Head of caudate nucleus (tissue), 42 donors: ENCODE measurements at regions of chr2 and their contacts with region 1.

Region 1: DNA sequence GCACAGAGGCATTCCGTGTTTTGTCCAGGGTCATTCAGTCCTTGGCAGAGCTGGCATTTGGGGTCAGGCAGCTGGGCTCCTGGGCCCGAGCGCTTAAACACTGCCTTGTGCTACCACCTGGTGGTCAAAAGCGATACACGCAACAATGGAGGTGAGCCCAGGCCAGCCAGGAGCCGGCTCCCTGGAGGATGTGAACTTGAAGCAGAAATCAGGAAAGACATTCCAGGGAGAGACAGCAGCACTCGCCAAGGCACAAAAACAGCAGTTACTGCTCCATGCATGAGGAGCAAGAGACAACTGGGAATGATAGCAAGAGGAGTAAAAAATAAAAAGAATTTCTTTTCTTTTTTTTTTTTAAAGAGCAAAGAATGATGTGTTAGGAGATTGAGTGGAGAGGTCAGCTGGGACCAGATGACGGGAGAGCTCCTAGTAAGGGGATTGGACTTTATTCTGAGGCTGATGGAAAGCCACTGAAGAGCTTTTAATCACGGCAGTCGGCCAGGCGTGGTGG is 20.7 kb downstream of the SCYGR8 start:
- DNase-seq: peak; percentile 70 to 91 (median 81)

Region 2: GRCh38 chr2:227862227-227862740 is 95.9 kb after region 1 on chr2:
- intact Hi-C with region 1: loop called (anchors 10 kb)
- DNase-seq: peak in 7 of 42 donors; percentile 13 to 74 (median 31)